ENCODE measurements at regions of chr14 and their contacts with region 1.

Region 1: GRCh38 chr14:103292426-103293374 is 41.3 kb upstream of the EIF5 start:
- DNase-seq: peak in 1 of 2 donors; percentile 95
- H3K4me3 ChIP-seq: no peak overlapping the region
- H3K27ac ChIP-seq: no peak overlapping the region
- H3K4me1 ChIP-seq: no peaks in the 10 kb centered on the region
- H3K27me3 ChIP-seq: no peaks in the 10 kb centered on the region
- CTCF ChIP-seq: peak; percentile 77 to 97 (median 95)
- POLR2A ChIP-seq: no peak

Region 2: GRCh38 chr14:103104654-103105452 is 187.8 kb before region 1 on chr14:
- intact Hi-C with region 1: loop called (anchors 5 kb)
- DNase-seq: no peak
- H3K4me3 ChIP-seq: peak overlapping the region in 1 of 2 donors; percentile 20
- H3K27ac ChIP-seq: no peak overlapping the region
- H3K4me1 ChIP-seq: peaks cover 42% of the 10 kb centered on the region
- H3K27me3 ChIP-seq: peaks cover 25% of the 10 kb centered on the region
- CTCF ChIP-seq: peak; percentile 90 to 99 (median 97)
- POLR2A ChIP-seq: no peak

Region 3: GRCh38 chr14:103185051-103185992 is 107.4 kb before region 1 on chr14:
- intact Hi-C with region 1: loop called (anchors 2 kb)
- DNase-seq: no peak
- H3K4me3 ChIP-seq: no peak overlapping the region
- H3K27ac ChIP-seq: peak overlapping the region; percentile 56
- H3K4me1 ChIP-seq: peaks cover 12% of the 10 kb centered on the region
- H3K27me3 ChIP-seq: no peaks in the 10 kb centered on the region
- CTCF ChIP-seq: peak in 2 of 3 experiments; percentile 44 to 63
- POLR2A ChIP-seq: no peak

Measured in vagina (tissue), 2 donors.